AG04449 (cell line): ENCODE measurements at regions of chr1 and their contacts with region 1.

Region 1: GRCh38 chr1:156062189-156062588 is 1.2 kb downstream of the RAB25 start:
- DNase-seq: no peak
- H3K4me3 ChIP-seq: no peak overlapping the region
- CTCF ChIP-seq: no peak

Region 2: GRCh38 chr1:156006666-156007376 is 55.4 kb before region 1 on chr1:
- CTCF ChIA-PET with region 1: interaction called, 12 read pairs
- POLR2A ChIA-PET with region 1: no interaction called
- DNase-seq: no peak
- H3K4me3 ChIP-seq: no peak overlapping the region
- CTCF ChIP-seq: no peak

Region 3: GRCh38 chr1:156025877-156026276 is 36.3 kb before region 1 on chr1:
- CTCF ChIA-PET with region 1: interaction called, 17 read pairs
- POLR2A ChIA-PET with region 1: no interaction called
- DNase-seq: no peak
- H3K4me3 ChIP-seq: no peak overlapping the region
- CTCF ChIP-seq: peak; percentile 76

Region 4: DNA sequence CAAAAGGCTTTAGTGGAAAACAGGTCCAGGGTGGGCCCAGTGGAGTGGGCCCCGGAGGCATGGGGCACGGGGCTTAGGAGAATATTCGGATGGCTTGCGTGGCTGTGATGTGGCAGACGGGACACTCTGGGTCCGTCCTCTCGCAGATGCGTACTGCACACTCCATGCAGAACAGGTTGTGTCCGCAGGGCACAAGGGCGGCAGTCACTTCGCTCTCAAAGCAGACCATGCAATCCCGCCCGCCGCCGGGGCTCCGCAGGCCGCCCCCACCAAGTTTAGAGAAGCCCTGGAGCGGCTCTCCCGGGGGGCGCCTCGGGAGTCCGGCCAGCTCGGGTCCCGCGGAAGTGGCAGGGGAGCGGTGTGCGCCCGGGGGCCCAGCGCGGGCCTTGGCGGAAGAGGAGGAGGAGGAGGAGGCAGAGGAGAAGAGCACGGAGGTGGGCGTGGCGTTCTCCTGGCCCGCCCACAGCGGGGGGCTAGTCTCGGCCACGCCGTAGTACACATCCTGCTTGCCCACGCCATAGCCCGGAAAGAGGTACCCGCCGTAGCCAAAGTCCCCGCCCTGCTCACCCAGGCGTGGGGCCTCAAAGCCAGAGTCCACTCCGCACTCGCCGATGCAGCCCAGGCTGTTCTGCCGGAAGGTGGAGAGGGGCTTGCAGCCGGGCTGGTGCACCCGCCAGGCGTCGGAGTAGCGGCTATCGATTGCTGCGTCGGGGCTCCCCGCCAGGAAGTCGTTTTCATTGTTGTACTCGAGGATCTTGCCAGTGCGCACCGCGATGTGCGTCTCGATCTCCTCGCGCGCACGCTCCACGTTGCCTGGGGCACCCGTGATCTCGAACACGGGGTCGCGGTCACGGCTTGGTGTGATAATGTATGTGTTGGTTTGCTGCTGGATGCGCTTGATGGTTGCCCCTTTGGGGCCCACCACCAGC is 14.6 kb after region 1 on chr1:
- CTCF ChIA-PET with region 1: interaction called, 24 read pairs
- POLR2A ChIA-PET with region 1: no interaction called
- DNase-seq: no peak
- H3K4me3 ChIP-seq: no peak overlapping the region
- CTCF ChIP-seq: no peak